ENCODE measurements at regions of chr16 and their contacts with region 1.

Region 1: DNA sequence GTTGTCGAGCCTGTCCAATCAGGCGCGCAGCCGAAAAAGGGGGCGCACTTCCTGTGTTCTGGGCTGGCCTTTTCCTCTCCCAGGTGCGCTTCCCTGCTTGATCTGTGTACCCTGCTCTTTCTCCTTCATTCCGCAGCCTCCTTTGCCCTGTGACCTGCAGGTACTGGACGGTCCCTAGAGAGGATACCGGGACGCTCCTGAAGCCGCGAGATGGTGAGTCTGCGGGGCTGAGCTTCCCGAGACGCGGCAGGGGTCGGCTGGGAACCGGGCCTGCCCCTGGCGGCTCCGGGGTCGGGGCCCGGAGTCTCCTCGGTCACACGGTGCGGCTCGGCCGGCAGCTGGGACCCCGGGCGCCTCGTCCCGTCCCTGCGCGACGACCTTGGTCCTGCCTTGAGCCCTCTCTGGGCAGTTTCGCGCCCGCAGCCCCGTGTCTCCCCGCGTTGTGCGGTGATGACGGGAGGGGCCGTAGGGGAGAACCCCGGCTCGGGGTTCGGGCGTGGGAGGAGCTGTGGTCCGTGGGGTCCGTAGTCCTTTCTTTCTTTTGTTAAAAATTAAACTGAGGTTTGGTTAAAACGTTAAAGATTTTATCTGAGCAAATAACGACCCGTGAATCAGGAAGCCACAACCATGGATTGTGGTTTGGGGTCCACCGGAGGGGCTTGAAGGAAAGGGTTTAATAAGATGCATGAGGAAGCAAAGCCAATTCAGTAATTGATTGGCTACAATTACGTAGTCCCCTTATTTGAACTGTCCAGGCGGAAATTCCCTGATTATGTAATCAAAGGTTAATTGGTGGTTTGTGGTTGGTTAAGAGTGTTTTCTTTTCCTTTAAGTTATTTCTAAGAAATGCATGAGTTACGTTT is 172.8 kb upstream of the ZNF267 start:
- DNase-seq: peak; percentile 95
- H3K4me3 ChIP-seq: peak overlapping the region; percentile 81 to 91 (median 85)
- H3K27ac ChIP-seq: peak overlapping the region; percentile 47 to 67 (median 66)
- H3K4me1 ChIP-seq: peaks cover 8 to 28% (median 20%) of the 10 kb centered on the region in 4 donors
- H3K27me3 ChIP-seq: no peaks in the 10 kb centered on the region
- CTCF ChIP-seq: peak in 1 of 3 experiments; percentile 11
- EP300 ChIP-seq: no peak
- POLR2A ChIP-seq: no peak

Region 2: GRCh38 chr16:30964574-30965226 is 736.1 kb before region 1 on chr16:
- intact Hi-C with region 1: loop called (anchors 10 kb)
- DNase-seq: no peak
- H3K4me3 ChIP-seq: no peak overlapping the region
- H3K27ac ChIP-seq: no peak overlapping the region
- H3K4me1 ChIP-seq: peaks cover 0 to 11% (median 2%) of the 10 kb centered on the region in 4 donors
- H3K27me3 ChIP-seq: no peaks in the 10 kb centered on the region
- CTCF ChIP-seq: no peak
- EP300 ChIP-seq: no peak
- POLR2A ChIP-seq: no peak

Region 3: GRCh38 chr16:31507929-31508705 is 192.6 kb before region 1 on chr16 and contains the start of gene RUSF1:
- intact Hi-C with region 1: loop called (anchors 2 kb)
- DNase-seq: peak; percentile 97
- H3K4me3 ChIP-seq: peak within 1 kb of the TSS; percentile 76 to 96 (median 87)
- H3K27ac ChIP-seq: peak within 1 kb of the TSS; percentile 90 to 93 (median 92)
- H3K4me1 ChIP-seq: peaks cover 24 to 40% (median 32%) of the 10 kb centered on the region in 4 donors
- H3K27me3 ChIP-seq: no peaks in the 10 kb centered on the region
- CTCF ChIP-seq: peak in 1 of 3 experiments; percentile 7
- EP300 ChIP-seq: no peak
- POLR2A ChIP-seq: peak; percentile 85
- total RNA-seq, gene RUSF1: 32.4 to 51.3 (median 43.6) TPM

Region 4: GRCh38 chr16:31842864-31843263 is 142.1 kb after region 1 on chr16:
- intact Hi-C with region 1: no loop called
- DNase-seq: no peak
- H3K4me3 ChIP-seq: no peak overlapping the region
- H3K27ac ChIP-seq: no peak overlapping the region
- H3K4me1 ChIP-seq: no peaks in the 10 kb centered on the region
- H3K27me3 ChIP-seq: peaks cover 0 to 6% (median 0%) of the 10 kb centered on the region in 4 donors
- CTCF ChIP-seq: no peak
- EP300 ChIP-seq: no peak
- POLR2A ChIP-seq: no peak

Measured in esophagus muscularis mucosa (tissue), 4 donors.